Right ventricle myocardium inferior (tissue), 1 donor: ENCODE measurements at regions of chr21 and their contacts with region 1.

Region 1: GRCh38 chr21:21146587-21147373 is 148.6 kb downstream of the NCAM2 start:
- DNase-seq: no peak
- ATAC-seq: no peak

Region 2: GRCh38 chr21:21436012-21436540 is 289.3 kb after region 1 on chr21:
- intact Hi-C with region 1: no loop called
- DNase-seq: no peak
- ATAC-seq: no peak

Region 3: DNA sequence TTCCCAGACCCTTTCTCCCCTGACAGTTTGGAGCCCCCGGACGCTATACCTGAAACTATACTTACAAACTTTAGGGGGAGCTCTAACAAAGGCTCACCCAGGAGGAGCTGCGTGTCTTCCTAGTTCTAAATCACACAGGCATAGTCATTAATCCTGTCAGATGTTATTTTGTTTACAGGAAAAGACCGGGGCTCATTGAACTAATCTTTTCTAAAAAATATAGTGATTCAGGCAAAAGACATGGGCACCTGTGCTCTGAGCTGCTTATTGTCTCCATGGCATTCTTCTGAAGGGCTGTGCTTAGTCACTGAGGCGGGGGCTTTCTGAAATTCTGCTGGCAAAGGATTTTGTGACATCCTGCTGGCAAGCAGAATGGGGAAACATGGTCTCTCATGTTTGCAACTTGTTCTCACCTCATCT is 1428.4 kb after region 1 on chr21:
- intact Hi-C with region 1: loop called (anchors 10 kb)
- DNase-seq: no peak
- ATAC-seq: no peak